ENCODE measurements at regions of chr12 and their contacts with region 1.

Region 1: GRCh38 chr12:58919231-58920101 is 838 bp downstream of the LRIG3 start:
- DNase-seq: peak; percentile 5 to 20
- ATAC-seq: peak; percentile 42 to 54
- H3K4me3 ChIP-seq: peak overlapping the region; percentile 62 to 96 (median 88)
- H3K27ac ChIP-seq: peak overlapping the region; percentile 85 to 95 (median 93)
- H3K4me1 ChIP-seq: peaks cover 35 to 37% of the 10 kb centered on the region in 2 donors
- H3K27me3 ChIP-seq: no peaks in the 10 kb centered on the region
- CTCF ChIP-seq: peak in 1 of 5 experiments; percentile 4
- POLR2A ChIP-seq: no peak

Region 2: DNA sequence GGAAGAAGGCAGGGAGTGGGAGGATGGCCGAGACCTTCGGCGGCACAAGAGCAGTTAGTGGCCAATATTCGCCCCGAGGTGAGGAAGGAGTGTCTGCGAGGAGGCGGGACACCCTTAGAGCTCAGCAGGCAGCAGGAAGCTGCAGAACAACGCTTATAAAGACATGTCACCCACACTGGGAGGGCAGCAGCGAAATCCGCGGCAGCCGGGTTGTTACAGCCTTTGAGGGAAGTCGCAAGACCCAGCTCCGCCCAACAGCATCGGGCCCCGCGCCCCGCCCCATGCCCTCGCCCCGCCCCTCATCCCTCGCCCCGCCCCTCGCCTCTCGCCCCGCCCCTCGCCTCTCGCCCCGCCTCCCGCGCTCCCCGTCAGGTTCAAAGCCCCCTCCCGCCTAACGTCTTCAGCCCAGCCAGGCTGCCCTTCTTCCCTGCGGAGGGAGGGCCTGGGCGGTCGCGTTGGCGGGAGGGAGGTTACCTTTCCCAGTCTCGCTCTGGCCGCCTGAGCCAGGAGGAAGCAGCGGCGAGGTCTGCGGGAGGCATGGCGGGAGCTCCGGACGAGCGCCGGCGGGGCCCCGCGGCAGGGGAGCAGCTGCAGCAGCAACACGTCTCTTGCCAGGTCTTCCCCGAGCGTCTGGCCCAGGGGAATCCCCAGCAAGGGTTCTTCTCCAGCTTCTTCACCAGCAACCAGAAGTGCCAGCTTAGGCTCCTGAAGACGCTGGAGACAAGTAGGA is 978.1 kb before region 1 on chr12 and contains the start of gene ATP23:
- in situ Hi-C with region 1: no loop called
- intact Hi-C with region 1: loop called (anchors 2 kb)
- DNase-seq: peak; percentile 80 to 83
- ATAC-seq: peak; percentile 89
- H3K4me3 ChIP-seq: peak within 1 kb of the TSS; percentile 78 to 97 (median 82)
- H3K27ac ChIP-seq: peak within 1 kb of the TSS; percentile 88 to 97 (median 94)
- H3K4me1 ChIP-seq: peaks cover 18 to 20% of the 10 kb centered on the region in 2 donors
- H3K27me3 ChIP-seq: no peaks in the 10 kb centered on the region
- CTCF ChIP-seq: no peak
- POLR2A ChIP-seq: peak; percentile 86 to 89
- total RNA-seq, gene ATP23: 7.1 to 26.4 (median 10.7) TPM

Region 3: GRCh38 chr12:58873486-58873885 is 46.0 kb before region 1 on chr12:
- in situ Hi-C with region 1: no loop called
- intact Hi-C with region 1: no loop called
- DNase-seq: no peak
- ATAC-seq: no peak
- H3K4me3 ChIP-seq: no peak overlapping the region
- H3K27ac ChIP-seq: no peak overlapping the region
- H3K4me1 ChIP-seq: no peaks in the 10 kb centered on the region
- H3K27me3 ChIP-seq: no peaks in the 10 kb centered on the region
- CTCF ChIP-seq: no peak
- POLR2A ChIP-seq: no peak

Measured in gastrocnemius medialis (tissue), 4 donors.